Body of pancreas (tissue), 4 donors: ENCODE measurements at regions of chr4 and their contacts with region 1.

Region 1: GRCh38 chr4:59161249-59161648 is 2038.9 kb upstream of the ADGRL3 start:
- DNase-seq: no peak
- ATAC-seq: no peak
- H3K4me3 ChIP-seq: no peak overlapping the region
- H3K27ac ChIP-seq: no peak overlapping the region
- H3K4me1 ChIP-seq: no peaks in the 10 kb centered on the region
- H3K27me3 ChIP-seq: no peaks in the 10 kb centered on the region
- CTCF ChIP-seq: no peak
- POLR2A ChIP-seq: no peak

Region 2: GRCh38 chr4:58274568-58274967 is 886.7 kb before region 1 on chr4:
- intact Hi-C with region 1: no loop called
- DNase-seq: no peak
- ATAC-seq: no peak
- H3K4me3 ChIP-seq: no peak overlapping the region
- H3K27ac ChIP-seq: no peak overlapping the region
- H3K4me1 ChIP-seq: no peaks in the 10 kb centered on the region
- H3K27me3 ChIP-seq: no peaks in the 10 kb centered on the region
- CTCF ChIP-seq: no peak
- POLR2A ChIP-seq: no peak

Region 3: DNA sequence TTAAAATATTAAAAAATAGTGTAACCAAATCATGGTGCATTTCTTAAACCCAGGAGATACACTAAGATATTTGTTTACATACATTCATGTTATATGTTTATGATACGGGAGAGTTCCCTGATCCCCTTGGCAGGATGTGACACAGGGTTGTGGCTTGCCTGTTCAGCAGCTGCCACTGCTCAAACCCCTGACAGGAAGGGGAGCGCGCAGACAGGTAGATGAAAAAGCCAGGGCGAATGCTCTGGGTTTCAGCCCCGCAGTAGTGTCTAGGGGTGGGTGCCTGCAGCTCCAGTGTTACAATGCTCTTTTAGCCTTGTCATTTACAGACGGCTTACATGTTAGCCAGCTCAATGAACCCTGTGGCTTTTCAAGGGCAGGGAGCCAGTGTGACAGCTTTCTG is 707.3 kb before region 1 on chr4:
- intact Hi-C with region 1: loop called (anchors 10 kb)
- DNase-seq: no peak
- ATAC-seq: no peak
- H3K4me3 ChIP-seq: no peak overlapping the region
- H3K27ac ChIP-seq: no peak overlapping the region
- H3K4me1 ChIP-seq: no peaks in the 10 kb centered on the region
- H3K27me3 ChIP-seq: no peaks in the 10 kb centered on the region
- CTCF ChIP-seq: no peak
- POLR2A ChIP-seq: no peak